GM12878 (cell line): ENCODE measurements at regions of chr11 and their contacts with region 1.

Region 1: DNA sequence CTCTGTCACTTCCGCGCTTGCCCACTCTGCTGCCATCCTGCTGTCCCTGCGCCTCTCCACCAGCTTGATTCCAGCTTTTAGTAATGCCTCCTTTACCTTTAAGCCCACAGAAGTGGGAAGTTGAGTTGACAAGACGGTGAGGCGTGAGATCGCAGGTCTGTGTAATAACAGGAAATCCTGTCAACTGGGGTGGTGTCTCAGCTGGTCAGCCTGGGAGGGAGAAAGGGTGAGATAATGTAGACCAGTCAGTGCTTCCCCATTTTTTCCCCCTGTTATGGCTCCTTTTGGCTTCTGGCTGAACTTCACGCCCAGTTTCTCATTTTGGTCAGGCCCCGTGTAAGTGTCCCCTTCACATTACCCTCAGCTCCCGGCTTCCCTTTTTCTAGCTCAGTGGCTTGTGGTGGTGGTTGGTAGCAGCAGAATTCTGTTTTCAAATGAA is 98.9 kb downstream of the TRAF6 start:
- DNase-seq: peak; percentile 31
- ATAC-seq: peak; percentile 90
- H3K4me3 ChIP-seq: no peak overlapping the region
- H3K27ac ChIP-seq: no peak overlapping the region
- H3K4me1 ChIP-seq: peaks cover 24% of the 10 kb centered on the region
- H3K27me3 ChIP-seq: no peaks in the 10 kb centered on the region
- CTCF ChIP-seq: no peak
- EP300 ChIP-seq: no peak; a peak in 1 of 4 replicates
- POLR2A ChIP-seq: no peak
- RAD21 ChIP-seq: no peak

Region 2: DNA sequence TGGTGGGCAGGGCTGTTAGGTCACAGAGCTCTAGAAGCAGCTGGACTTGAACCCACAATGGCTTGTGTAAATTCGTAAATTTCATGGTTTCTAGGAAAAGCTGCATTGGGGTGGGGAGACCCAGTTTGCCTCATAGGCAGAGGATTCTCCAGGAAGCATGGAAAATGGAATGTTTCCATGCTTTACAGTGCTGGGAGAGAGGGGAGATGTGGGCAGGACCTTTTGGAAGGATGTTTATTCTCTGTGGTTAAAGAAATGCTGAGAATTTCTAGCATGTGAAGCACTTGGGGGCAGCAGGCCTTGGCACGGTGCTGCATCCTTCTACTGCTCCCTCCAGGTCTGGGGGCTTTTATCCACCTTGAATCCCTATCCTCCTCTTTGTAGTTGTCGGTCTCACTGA is 52.6 kb after region 1 on chr11:
- CTCF ChIA-PET with region 1: no interaction called
- POLR2A ChIA-PET with region 1: no interaction called
- RAD21 ChIA-PET with region 1: no interaction called
- SMC1A ChIA-PET with region 1: interaction called, 3 read pairs
- in situ Hi-C with region 1: loop called (anchors 5 kb)
- intact Hi-C with region 1: no loop called
- DNase-seq: no peak
- ATAC-seq: no peak
- H3K4me3 ChIP-seq: no peak overlapping the region
- H3K27ac ChIP-seq: no peak overlapping the region
- H3K4me1 ChIP-seq: no peaks in the 10 kb centered on the region
- H3K27me3 ChIP-seq: peaks cover 0 to 4% of the 10 kb centered on the region in 2 experiments; a peak in 2 of 4 replicates
- CTCF ChIP-seq: no peak
- EP300 ChIP-seq: no peak
- POLR2A ChIP-seq: no peak
- RAD21 ChIP-seq: no peak